CD8-positive, alpha-beta T cell (primary cell): ENCODE measurements at regions of chr11 and their contacts with region 1.

Region 1: DNA sequence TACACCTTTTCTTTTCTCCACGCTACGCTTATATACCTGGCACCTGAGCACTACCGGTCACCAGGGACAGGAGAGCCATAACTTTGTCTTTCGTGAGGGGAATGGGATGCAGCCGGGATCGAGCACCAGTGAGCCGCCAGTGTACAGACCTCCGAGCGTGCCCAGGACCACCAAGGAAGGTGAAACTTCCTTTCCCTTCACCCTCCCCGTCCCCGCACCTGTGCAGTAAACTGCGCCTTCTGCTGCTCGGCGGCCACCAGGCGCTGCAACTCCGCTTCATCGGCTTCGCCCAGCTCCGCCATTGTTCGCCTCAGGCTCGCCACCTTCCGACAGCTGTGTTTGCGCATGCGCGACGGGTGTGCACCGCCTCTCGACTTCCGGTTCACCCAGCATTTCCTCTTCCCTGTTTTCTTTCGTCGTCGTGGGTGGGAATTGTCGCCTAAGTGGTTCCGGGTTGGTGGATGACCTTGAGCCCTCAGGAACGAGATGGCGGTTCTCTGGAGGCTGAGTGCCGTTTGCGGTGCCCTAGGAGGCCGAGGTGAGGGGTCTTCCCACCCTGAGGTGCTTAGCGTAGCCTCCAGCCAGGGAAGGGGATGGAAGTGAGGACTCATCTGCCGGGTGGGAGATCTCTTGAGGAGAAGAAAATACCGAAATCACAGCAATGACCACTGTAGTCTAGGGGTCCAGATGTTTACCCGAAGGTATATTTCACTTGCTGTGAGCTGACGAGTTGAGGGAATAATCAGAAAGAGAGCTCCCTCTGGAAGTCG is at the starts of genes SDHD and TIMM8B:
- DNase-seq: peak; percentile 92 to 99 (median 95)
- ATAC-seq: peak; percentile 93
- H3K4me3 ChIP-seq: peak within 1 kb of the TSS; percentile 87 to 92
- H3K4me3 Mint-ChIP-seq: peak within 1 kb of the TSS; percentile 100
- H3K27ac ChIP-seq: peak within 1 kb of the TSS; percentile 81 to 82
- H3K27ac Mint-ChIP-seq: peak within 1 kb of the TSS; percentile 99
- H3K4me1 ChIP-seq: peaks cover 33% of the 10 kb centered on the region
- H3K4me1 Mint-ChIP-seq: peaks cover 56% of the 10 kb centered on the region
- H3K27me3 ChIP-seq: no peaks in the 10 kb centered on the region
- H3K27me3 Mint-ChIP-seq: no peaks in the 10 kb centered on the region
- CTCF ChIP-seq: no peak
- total RNA-seq, gene SDHD: 31.2 to 32.3 TPM
- total RNA-seq, gene TIMM8B: 10.5 to 10.7 TPM

Region 2: GRCh38 chr11:111766093-111766833 is 320.3 kb before region 1 on chr11 and contains the start of gene PPP2R1B:
- CTCF ChIA-PET with region 1: no interaction called
- POLR2A ChIA-PET with region 1: no interaction called
- intact Hi-C with region 1: loop called (anchors 2 to 5 kb)
- DNase-seq: peak; percentile 33 to 83 (median 73)
- ATAC-seq: peak; percentile 98
- H3K4me3 ChIP-seq: peak within 1 kb of the TSS; percentile 86 to 97
- H3K4me3 Mint-ChIP-seq: peak within 1 kb of the TSS; percentile 99
- H3K27ac ChIP-seq: peak within 1 kb of the TSS; percentile 63 to 67
- H3K27ac Mint-ChIP-seq: peak within 1 kb of the TSS; percentile 97
- H3K4me1 ChIP-seq: peaks cover 12% of the 10 kb centered on the region
- H3K4me1 Mint-ChIP-seq: peaks cover 39% of the 10 kb centered on the region
- H3K27me3 ChIP-seq: no peaks in the 10 kb centered on the region
- H3K27me3 Mint-ChIP-seq: no peaks in the 10 kb centered on the region
- CTCF ChIP-seq: no peak
- total RNA-seq, gene PPP2R1B: 47.4 to 53.8 TPM

Region 3: GRCh38 chr11:111878849-111879636 is 207.6 kb before region 1 on chr11 and contains the starts of genes CFAP68 and FDXACB1:
- CTCF ChIA-PET with region 1: no interaction called
- POLR2A ChIA-PET with region 1: interaction called, 3 read pairs
- intact Hi-C with region 1: loop called (anchors 1 kb)
- DNase-seq: peak; percentile 91 to 99 (median 95)
- ATAC-seq: peak; percentile 89
- H3K4me3 ChIP-seq: peak within 1 kb of the TSS; percentile 73 to 76
- H3K4me3 Mint-ChIP-seq: peak within 1 kb of the TSS; percentile 92
- H3K27ac ChIP-seq: peak within 1 kb of the TSS; percentile 98
- H3K27ac Mint-ChIP-seq: peak within 1 kb of the TSS; percentile 100
- H3K4me1 ChIP-seq: peaks cover 14% of the 10 kb centered on the region
- H3K4me1 Mint-ChIP-seq: peaks cover 24% of the 10 kb centered on the region
- H3K27me3 ChIP-seq: no peaks in the 10 kb centered on the region
- H3K27me3 Mint-ChIP-seq: no peaks in the 10 kb centered on the region
- CTCF ChIP-seq: peak; percentile 94
- total RNA-seq, gene CFAP68: 21.7 to 22.7 TPM
- total RNA-seq, gene FDXACB1: 4.3 to 5.4 TPM

Region 4: GRCh38 chr11:112074026-112074811 is 12.4 kb before region 1 on chr11 and contains the start of gene NKAPD1:
- CTCF ChIA-PET with region 1: interaction called, 7 read pairs
- POLR2A ChIA-PET with region 1: interaction called, 11 read pairs
- intact Hi-C with region 1: loop called (anchors 1 kb)
- DNase-seq: peak; percentile 64 to 92 (median 82)
- ATAC-seq: peak; percentile 79
- H3K4me3 ChIP-seq: peak within 1 kb of the TSS; percentile 79 to 87
- H3K4me3 Mint-ChIP-seq: peak within 1 kb of the TSS; percentile 96
- H3K27ac ChIP-seq: peak within 1 kb of the TSS; percentile 70 to 80
- H3K27ac Mint-ChIP-seq: peak within 1 kb of the TSS; percentile 95
- H3K4me1 ChIP-seq: peaks cover 12% of the 10 kb centered on the region
- H3K4me1 Mint-ChIP-seq: peaks cover 33% of the 10 kb centered on the region
- H3K27me3 ChIP-seq: no peaks in the 10 kb centered on the region
- H3K27me3 Mint-ChIP-seq: peaks cover 7% of the 10 kb centered on the region
- CTCF ChIP-seq: no peak
- total RNA-seq, gene NKAPD1: 16.3 to 17.0 TPM

Region 5: DNA sequence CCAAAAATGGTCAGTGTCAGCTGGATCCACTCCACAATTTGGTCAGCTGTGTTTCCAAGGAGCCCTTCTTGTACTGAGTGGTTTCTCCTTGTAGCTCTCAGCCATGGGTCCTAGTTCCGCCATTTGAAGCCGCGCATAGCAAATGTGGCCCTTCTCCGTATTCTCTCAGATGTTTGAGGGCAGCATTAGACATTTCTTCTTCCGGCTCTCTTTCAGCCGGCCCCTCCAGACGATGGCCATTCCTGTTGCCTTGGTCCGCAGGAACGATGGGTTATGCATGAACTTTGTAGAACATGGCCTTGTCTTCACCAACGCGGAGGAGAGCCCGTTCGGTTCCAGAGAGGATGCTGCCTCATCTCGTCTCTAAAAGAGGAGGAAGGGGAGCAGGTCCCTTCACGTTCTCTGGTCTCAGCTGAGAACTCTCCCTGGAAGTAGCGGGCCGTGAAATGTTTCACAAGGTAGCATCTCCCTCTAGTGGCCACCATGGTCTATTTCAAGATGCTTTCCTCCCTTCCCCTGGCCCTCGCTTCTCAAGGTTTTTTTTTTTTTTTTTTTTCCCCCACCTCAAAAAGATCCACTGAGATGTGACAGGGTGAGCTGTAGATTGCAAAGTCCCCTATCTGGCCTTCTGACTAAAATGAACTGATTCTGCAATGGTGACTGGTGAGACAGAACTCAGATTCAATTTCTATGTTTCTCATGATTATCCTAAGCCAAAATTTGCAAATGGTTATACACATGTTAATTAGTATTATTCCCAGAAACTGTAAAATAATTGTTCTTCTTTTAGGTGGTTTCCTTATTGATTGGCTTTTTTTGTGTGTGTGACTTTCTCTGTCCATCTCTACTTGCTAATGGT is 193.9 kb after region 1 on chr11:
- CTCF ChIA-PET with region 1: no interaction called
- POLR2A ChIA-PET with region 1: interaction called, 3 read pairs
- intact Hi-C with region 1: loop called in 1 of 2 experiments (anchors 5 kb)
- DNase-seq: peak; percentile 24 to 90 (median 67)
- ATAC-seq: peak; percentile 93
- H3K4me3 ChIP-seq: peak overlapping the region; percentile 60 to 79
- H3K4me3 Mint-ChIP-seq: peak overlapping the region; percentile 92
- H3K27ac ChIP-seq: peak overlapping the region in 1 of 2 experiments; percentile 28
- H3K27ac Mint-ChIP-seq: peak overlapping the region; percentile 77
- H3K4me1 ChIP-seq: no peaks in the 10 kb centered on the region
- H3K4me1 Mint-ChIP-seq: peaks cover 8% of the 10 kb centered on the region
- H3K27me3 ChIP-seq: no peaks in the 10 kb centered on the region
- H3K27me3 Mint-ChIP-seq: no peaks in the 10 kb centered on the region
- CTCF ChIP-seq: peak; percentile 44

Region 6: DNA sequence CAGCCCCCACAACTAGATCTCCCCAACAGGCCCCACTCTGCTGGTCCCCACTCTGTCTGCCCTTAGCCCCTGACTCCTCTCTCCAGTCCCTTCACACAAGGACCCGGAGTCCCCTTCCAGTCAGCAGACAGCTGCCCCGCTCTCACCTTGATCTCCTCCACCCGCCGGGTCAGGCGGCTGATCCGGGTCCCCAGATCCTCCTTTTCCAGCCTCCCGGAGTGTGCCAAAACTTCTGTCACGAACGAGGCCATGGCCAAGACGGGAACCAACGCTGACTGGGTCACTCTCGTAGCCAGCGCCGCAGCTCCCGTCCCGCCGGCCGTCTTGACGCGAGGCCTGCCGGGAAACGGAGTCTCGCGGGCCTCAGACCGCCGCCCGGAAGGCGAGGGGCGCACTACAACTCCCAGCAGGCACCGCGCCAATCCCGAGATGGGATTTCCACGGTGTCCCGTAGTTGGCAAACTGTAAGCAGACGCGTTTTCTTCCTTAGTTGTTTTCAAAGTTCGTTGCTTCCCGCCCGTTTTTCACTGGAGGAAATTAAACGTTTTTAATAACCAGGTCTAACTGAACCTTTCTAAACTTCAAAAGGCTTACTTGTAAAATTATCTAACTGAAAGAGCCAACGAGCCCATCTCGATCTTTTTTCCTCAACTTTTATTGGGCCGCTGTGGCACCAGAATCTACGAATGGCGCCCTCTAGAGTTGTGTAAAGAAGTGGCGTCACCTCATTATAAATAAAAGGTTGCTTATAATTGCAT is 1687.0 kb after region 1 on chr11 and contains the start of gene ZW10:
- CTCF ChIA-PET with region 1: no interaction called
- POLR2A ChIA-PET with region 1: no interaction called
- intact Hi-C with region 1: loop called in 1 of 2 experiments (anchors 5 kb)
- DNase-seq: peak; percentile 79 to 96 (median 91)
- ATAC-seq: peak; percentile 98
- H3K4me3 ChIP-seq: peak within 1 kb of the TSS; percentile 89 to 90
- H3K4me3 Mint-ChIP-seq: peak within 1 kb of the TSS; percentile 99
- H3K27ac ChIP-seq: peak within 1 kb of the TSS; percentile 59 to 73
- H3K27ac Mint-ChIP-seq: peak within 1 kb of the TSS; percentile 89
- H3K4me1 ChIP-seq: peaks cover 3% of the 10 kb centered on the region
- H3K4me1 Mint-ChIP-seq: peaks cover 28% of the 10 kb centered on the region
- H3K27me3 ChIP-seq: no peaks in the 10 kb centered on the region
- H3K27me3 Mint-ChIP-seq: no peaks in the 10 kb centered on the region
- CTCF ChIP-seq: peak; percentile 96
- total RNA-seq, gene ZW10: 2.6 to 2.8 TPM